Activated CD8-positive, alpha-beta T cell treated with anti-CD3 and anti-CD28 coated beads for 36 hours (primary cell): ENCODE measurements at regions of chr19 and their contacts with region 1.

Region 1: GRCh38 chr19:49896863-49897621 is at the start of gene IL4I1:
- DNase-seq: peak; percentile 89
- ATAC-seq: peak; percentile 68
- H3K4me3 Mint-ChIP-seq: peak within 1 kb of the TSS; percentile 75
- H3K27ac Mint-ChIP-seq: peak within 1 kb of the TSS; percentile 96
- H3K4me1 Mint-ChIP-seq: peaks cover 60% of the 10 kb centered on the region
- H3K27me3 Mint-ChIP-seq: no peaks in the 10 kb centered on the region
- CTCF ChIP-seq: no peak
- total RNA-seq, gene IL4I1: 16.1 to 16.2 TPM

Region 2: GRCh38 chr19:49911381-49912145 is 14.5 kb after region 1 on chr19:
- CTCF ChIA-PET with region 1: interaction called, 7 read pairs
- POLR2A ChIA-PET with region 1: interaction called, 59 read pairs
- intact Hi-C with region 1: no loop called
- DNase-seq: peak; percentile 56
- ATAC-seq: peak; percentile 79
- H3K4me3 Mint-ChIP-seq: peak overlapping the region; percentile 49
- H3K27ac Mint-ChIP-seq: peak overlapping the region; percentile 88
- H3K4me1 Mint-ChIP-seq: peaks cover 70% of the 10 kb centered on the region
- H3K27me3 Mint-ChIP-seq: no peaks in the 10 kb centered on the region
- CTCF ChIP-seq: no peak